Activated CD8-positive, alpha-beta T cell treated with anti-CD3 and anti-CD28 coated beads for 36 hours (primary cell): ENCODE measurements at regions of chr5 and their contacts with region 1.

Region 1: DNA sequence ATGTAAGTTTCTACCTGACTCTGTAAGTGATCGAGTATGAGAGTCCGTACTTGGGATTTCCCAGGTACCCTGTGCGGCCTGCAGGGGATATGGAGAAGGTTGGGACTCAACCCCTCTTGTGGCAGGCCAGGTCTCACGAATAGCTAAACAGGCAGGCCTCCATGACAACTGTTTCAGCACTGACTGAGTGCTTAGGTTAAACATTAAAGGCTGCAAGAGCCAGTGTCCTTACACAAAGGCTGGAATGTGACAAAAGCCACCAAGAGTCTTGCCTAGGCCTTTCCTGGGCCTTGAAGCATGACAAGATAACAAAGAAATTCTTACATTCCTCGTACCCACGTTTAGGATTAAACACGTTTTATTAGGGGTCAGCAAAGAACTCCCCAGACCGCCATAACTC is 58.6 kb downstream of the THBS4 start:
- DNase-seq: no peak
- ATAC-seq: no peak
- H3K4me3 Mint-ChIP-seq: no peak overlapping the region
- H3K27ac Mint-ChIP-seq: peak overlapping the region; percentile 27
- H3K4me1 Mint-ChIP-seq: peaks cover 17% of the 10 kb centered on the region
- H3K27me3 Mint-ChIP-seq: no peaks in the 10 kb centered on the region
- CTCF ChIP-seq: no peak

Region 2: GRCh38 chr5:80159133-80159815 is 65.5 kb after region 1 on chr5:
- CTCF ChIA-PET with region 1: interaction called, 11 read pairs
- POLR2A ChIA-PET with region 1: no interaction called
- intact Hi-C with region 1: no loop called
- DNase-seq: no peak
- ATAC-seq: no peak
- H3K4me3 Mint-ChIP-seq: no peak overlapping the region
- H3K27ac Mint-ChIP-seq: peak overlapping the region; percentile 65
- H3K4me1 Mint-ChIP-seq: peaks cover 38% of the 10 kb centered on the region
- H3K27me3 Mint-ChIP-seq: no peaks in the 10 kb centered on the region
- CTCF ChIP-seq: no peak

Region 3: GRCh38 chr5:80191991-80192398 is 98.2 kb after region 1 on chr5:
- CTCF ChIA-PET with region 1: interaction called, 24 read pairs
- POLR2A ChIA-PET with region 1: interaction called, 5 read pairs
- intact Hi-C with region 1: loop called (anchors 5 kb)
- DNase-seq: peak; percentile 73
- ATAC-seq: peak; percentile 70
- H3K4me3 Mint-ChIP-seq: peak overlapping the region; percentile 66
- H3K27ac Mint-ChIP-seq: peak overlapping the region; percentile 86
- H3K4me1 Mint-ChIP-seq: peaks cover 77% of the 10 kb centered on the region
- H3K27me3 Mint-ChIP-seq: no peaks in the 10 kb centered on the region
- CTCF ChIP-seq: no peak

Region 4: DNA sequence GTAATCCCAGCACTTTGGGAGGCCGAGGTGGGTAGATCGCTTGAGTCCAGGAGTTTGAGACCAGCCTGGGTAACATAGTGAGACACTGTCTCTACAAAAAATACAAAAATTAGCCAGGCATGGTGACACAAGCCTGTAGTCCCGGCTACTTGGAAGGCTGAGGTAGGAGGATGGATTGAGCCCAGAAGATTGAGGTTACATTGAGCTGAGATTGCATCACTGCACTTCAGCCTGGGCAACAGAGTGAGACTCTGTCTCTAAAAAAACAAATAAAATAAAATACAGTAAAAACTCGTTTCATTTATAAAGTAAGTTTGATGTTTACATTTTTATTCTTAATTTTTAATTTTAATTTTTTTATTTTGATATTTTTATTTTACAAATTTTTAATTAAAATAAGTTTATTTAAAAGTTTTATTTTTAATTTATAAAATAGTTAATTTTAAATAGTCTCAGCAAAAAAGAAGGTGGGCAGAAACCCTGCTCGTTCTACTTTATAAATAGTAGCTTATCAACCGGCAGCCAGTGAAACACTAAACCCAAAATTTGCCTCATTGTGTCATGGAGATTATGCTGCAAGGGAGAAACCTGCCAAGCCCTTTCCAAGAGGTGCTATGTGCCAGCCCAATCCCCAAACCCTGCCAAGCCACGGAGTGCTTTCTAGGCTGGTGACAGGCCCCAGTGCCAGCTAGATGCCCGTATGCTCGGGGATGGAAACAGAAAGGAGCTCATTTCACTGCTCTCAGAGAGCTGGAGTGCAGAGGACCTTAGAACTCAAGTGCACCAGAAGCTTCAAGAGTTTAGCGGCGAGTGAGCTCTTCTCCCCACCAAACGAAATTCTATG is 123.2 kb after region 1 on chr5:
- CTCF ChIA-PET with region 1: interaction called, 12 read pairs
- POLR2A ChIA-PET with region 1: interaction called, 3 read pairs
- intact Hi-C with region 1: no loop called
- DNase-seq: peak; percentile 67
- ATAC-seq: peak; percentile 22
- H3K4me3 Mint-ChIP-seq: peak overlapping the region; percentile 60
- H3K27ac Mint-ChIP-seq: peak overlapping the region; percentile 91
- H3K4me1 Mint-ChIP-seq: peaks cover 85% of the 10 kb centered on the region
- H3K27me3 Mint-ChIP-seq: no peaks in the 10 kb centered on the region
- CTCF ChIP-seq: no peak

Region 5: DNA sequence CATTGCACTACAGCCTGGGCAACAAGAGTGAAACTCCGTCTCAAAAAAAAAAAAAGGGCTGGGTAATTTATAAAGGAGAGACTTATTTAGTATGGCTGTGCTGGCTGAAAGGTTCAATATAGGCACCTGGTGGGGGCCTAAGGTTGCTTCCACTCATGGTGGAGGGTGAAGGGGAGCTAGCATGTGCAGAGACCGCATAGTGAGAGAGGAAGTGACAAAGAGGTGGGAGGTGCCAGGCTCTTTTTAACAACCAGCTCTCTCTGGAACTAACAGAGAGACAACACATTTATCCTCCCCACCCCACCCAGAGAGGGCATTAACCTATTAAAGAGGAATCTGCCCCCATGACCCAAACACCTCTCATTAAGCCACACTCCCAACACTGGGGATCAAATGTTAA is 190.9 kb after region 1 on chr5:
- CTCF ChIA-PET with region 1: interaction called, 104 read pairs
- POLR2A ChIA-PET with region 1: no interaction called
- intact Hi-C with region 1: no loop called
- DNase-seq: peak; percentile 70
- ATAC-seq: peak; percentile 92
- H3K4me3 Mint-ChIP-seq: no peak overlapping the region
- H3K27ac Mint-ChIP-seq: peak overlapping the region; percentile 90
- H3K4me1 Mint-ChIP-seq: peaks cover 21% of the 10 kb centered on the region
- H3K27me3 Mint-ChIP-seq: no peaks in the 10 kb centered on the region
- CTCF ChIP-seq: no peak